Activated CD8-positive, alpha-beta memory T cell treated with anti-CD3 and anti-CD28 coated beads, Interleukin-2, amount 10 ng/mL, durations not matched to agents 7 days and 5 days (primary cell): ENCODE measurements at regions of chr7 and their contacts with region 1.

Region 1: DNA sequence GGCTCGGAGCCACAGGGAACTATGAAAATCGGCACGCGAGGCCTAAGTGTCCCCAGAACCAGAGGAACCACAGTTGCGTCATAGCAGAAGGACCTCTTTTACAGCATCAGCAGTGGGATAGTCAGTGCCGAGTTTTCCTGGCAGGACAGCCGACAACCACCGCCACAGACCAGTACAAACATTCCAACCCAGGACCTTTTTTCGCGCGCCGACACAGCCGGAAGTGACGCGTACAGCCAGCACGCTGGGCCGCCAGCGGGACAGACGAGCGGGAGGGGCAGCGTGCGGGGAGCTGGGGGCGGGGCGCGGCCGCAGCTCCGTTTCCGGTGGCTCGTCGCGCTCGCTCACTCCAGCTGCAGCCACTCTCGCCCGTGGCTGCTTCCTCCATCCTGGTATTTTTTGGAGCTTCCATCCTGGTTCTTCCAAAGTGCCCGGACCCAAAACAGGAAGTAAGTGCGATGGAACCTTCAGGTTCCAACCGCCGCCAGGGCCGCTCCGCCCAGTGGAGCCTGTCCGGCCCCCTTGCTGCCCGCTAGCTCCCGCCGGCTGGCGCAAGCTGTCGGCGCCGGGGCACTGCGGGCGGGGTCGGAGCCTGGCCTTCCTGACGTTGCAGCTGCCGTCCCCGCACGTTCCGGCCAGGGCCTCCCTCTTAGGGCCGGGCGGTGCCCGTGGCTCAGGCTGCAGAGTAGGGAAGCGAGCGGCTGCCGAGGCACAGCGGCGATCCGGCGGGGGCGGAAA is at the start of gene DMTF1:
- DNase-seq: peak; percentile 92
- ATAC-seq: peak; percentile 84
- H3K4me3 Mint-ChIP-seq: peak within 1 kb of the TSS; percentile 90
- H3K27ac Mint-ChIP-seq: peak within 1 kb of the TSS; percentile 97
- H3K4me1 Mint-ChIP-seq: peaks cover 37% of the 10 kb centered on the region
- H3K27me3 Mint-ChIP-seq: no peaks in the 10 kb centered on the region
- total RNA-seq, gene DMTF1: 104 to 121 TPM

Region 2: GRCh38 chr7:86926732-86927131 is 225.5 kb before region 1 on chr7:
- CTCF ChIA-PET with region 1: interaction called, 42 read pairs
- DNase-seq: no peak
- ATAC-seq: no peak
- H3K4me3 Mint-ChIP-seq: no peak overlapping the region
- H3K27ac Mint-ChIP-seq: no peak overlapping the region
- H3K4me1 Mint-ChIP-seq: no peaks in the 10 kb centered on the region
- H3K27me3 Mint-ChIP-seq: peaks cover 6% of the 10 kb centered on the region

Region 3: GRCh38 chr7:86939197-86939814 is 213.0 kb before region 1 on chr7:
- CTCF ChIA-PET with region 1: interaction called, 29 read pairs
- DNase-seq: peak; percentile 52
- ATAC-seq: peak; percentile 65
- H3K4me3 Mint-ChIP-seq: no peak overlapping the region
- H3K27ac Mint-ChIP-seq: no peak overlapping the region
- H3K4me1 Mint-ChIP-seq: no peaks in the 10 kb centered on the region
- H3K27me3 Mint-ChIP-seq: peaks cover 6% of the 10 kb centered on the region

Region 4: GRCh38 chr7:87213811-87214210 is 61.5 kb after region 1 on chr7:
- CTCF ChIA-PET with region 1: interaction called, 42 read pairs
- DNase-seq: no peak
- ATAC-seq: no peak
- H3K4me3 Mint-ChIP-seq: peak overlapping the region; percentile 16
- H3K27ac Mint-ChIP-seq: peak overlapping the region; percentile 76
- H3K4me1 Mint-ChIP-seq: peaks cover 71% of the 10 kb centered on the region
- H3K27me3 Mint-ChIP-seq: no peaks in the 10 kb centered on the region